ENCODE measurements at regions of chr20 and their contacts with region 1.

Region 1: GRCh38 chr20:2451939-2452732 is 18.5 kb downstream of the SNRPB start:
- DNase-seq: peak; percentile 62
- CTCF ChIP-seq: peak; percentile 79

Region 2: DNA sequence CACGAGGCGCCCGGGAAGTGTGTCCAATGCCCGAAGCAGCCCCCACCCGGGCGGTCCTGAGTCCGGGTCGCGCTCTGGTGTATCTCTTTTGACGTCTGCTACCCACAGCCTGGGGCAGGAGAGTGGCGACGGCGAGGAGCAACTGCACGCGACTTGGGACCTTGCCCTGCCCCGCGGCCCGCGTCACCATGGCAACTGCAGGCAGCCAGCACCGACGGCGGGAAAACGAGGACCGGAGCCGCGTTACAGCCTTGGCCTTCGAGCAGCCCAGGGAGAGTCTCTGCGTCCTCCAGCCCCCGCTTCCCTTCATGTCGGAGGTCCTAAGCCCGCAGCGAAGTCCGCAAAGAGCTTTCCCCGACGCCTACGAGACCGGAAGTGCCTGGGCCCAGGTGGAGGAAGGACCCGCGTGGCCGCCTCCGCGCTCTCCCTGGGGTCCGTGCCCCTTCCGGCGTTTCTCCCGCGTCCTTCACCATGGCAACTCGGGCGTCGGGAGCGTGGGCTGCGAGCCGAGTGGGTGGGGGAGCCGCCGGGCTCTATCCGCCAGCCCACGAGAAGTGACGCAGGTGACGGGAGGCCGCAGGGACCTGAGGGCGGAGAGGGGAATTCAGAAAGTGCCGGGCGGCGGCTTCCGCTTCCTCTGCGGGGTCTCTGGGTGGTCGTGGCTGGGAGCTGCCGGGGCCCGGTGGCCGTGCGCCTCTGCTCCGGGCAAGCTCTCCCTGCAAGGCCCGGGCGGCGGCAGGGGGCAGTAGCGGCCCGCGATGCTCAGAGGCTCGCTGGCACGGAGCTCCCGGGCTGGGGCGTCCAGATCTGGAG is 245.0 kb before region 1 on chr20:
- CTCF ChIA-PET with region 1: interaction called, 28 read pairs
- POLR2A ChIA-PET with region 1: no interaction called
- DNase-seq: peak; percentile 86
- CTCF ChIP-seq: peak; percentile 77

Region 3: DNA sequence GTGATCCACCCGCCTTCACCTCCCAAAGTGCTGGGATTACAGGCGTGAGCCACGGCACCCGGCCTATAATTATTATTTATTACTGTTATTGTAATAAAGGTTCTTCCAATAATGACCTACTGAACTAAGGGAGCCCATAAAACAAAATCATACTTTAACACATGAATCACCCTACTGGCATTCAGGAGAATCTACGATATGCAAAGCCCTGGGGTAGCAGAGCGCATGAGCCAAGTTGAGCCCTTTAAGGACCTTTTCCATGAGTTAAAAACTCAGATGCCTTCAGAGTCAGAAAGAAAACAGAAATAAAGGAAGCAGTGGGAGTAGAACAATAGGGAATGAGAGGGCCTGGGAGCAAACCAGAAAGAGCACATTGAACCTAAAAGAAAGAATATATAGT is 23.1 kb before region 1 on chr20:
- CTCF ChIA-PET with region 1: interaction called, 28 read pairs
- POLR2A ChIA-PET with region 1: no interaction called
- DNase-seq: no peak
- CTCF ChIP-seq: no peak

Region 4: GRCh38 chr20:2463616-2464365 is 11.7 kb after region 1 on chr20:
- CTCF ChIA-PET with region 1: interaction called, 32 read pairs
- POLR2A ChIA-PET with region 1: interaction called, 3 read pairs
- DNase-seq: no peak
- CTCF ChIP-seq: no peak

Region 5: DNA sequence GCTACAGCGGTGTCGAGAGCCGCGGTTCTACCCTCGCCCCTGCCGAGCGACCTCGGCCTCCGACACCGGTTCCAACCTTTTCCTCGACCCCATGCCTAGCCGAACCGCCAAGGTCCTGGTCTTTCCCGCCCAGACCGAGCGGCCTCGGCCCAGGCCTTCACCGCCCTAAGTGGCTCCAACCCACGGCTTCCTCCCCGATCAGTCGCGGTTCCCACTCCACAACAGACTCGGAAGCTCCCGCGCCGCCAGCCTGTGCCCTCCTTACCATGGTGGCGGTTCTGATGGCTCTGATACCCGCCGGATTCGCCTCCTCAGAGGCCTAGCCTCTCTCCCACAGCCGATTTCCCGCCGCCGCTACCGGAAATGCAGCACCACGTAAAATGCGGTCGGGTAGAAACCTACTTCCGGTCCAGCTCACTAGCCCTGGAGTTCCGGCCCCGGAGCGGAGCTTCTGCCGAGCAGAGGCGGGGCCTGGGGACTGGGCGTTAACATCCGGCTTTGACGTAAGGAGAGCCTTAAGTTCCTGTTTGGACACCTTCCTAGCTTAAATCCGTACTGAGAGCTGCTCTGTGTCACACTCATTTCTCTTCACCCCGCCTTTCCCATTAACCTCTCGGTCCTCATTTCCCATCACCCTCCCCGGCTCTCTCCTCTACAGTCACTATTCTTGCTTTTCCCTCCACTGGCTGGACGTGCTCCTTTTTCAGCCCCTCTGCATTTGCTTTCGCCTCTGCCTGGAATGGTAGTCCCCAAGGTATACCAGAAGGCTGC is 18.5 kb after region 1 on chr20 and contains the start of gene SNRPB:
- CTCF ChIA-PET with region 1: interaction called, 32 read pairs
- POLR2A ChIA-PET with region 1: interaction called, 8 read pairs
- DNase-seq: peak; percentile 98
- CTCF ChIP-seq: no peak

Region 6: DNA sequence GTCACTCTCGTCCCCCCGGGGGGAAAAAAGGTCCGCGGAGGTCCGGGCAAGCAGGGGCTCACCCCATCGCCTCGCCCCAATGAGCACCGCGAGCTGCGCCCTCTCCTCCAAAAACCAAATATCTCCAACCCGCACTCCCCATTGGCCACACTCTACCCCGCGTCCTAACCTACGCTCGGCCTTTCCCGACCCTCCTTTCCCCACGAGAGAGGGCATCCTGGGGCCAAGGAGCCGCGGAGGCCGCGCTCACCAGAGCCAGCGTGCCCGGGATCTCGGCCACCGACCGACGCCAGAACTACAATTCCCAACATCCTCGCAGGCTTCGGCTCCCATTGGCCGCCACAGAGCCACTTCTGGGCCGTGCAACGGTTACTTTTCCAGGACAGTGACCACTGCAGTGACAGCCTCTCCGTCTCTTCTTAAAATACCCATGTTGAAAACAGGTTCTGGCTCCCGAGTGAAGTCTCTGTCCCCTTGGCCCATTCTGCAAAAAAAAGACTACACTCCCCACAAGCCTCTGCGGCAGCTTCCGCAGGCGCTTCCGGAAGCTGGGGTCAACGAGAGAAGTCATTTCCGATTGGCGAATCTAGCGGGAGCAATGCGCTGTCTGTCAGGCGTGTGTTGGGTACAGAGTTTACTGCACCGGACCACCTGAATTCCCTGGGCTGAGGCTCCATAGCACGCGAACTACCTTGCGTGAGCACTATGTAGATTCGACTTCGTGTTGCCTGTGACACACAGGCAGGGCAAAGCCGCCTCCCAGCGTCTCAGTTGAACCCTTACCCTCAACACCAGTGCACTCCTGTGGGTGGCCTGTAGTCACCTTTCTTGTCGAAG is 56.7 kb after region 1 on chr20 and contains the start of gene ZNF343:
- CTCF ChIA-PET with region 1: no interaction called
- POLR2A ChIA-PET with region 1: no interaction called
- DNase-seq: peak; percentile 92
- CTCF ChIP-seq: no peak